Heart right ventricle (tissue), 16 donors: ENCODE measurements at regions of chr7 and their contacts with region 1.

Region 1: DNA sequence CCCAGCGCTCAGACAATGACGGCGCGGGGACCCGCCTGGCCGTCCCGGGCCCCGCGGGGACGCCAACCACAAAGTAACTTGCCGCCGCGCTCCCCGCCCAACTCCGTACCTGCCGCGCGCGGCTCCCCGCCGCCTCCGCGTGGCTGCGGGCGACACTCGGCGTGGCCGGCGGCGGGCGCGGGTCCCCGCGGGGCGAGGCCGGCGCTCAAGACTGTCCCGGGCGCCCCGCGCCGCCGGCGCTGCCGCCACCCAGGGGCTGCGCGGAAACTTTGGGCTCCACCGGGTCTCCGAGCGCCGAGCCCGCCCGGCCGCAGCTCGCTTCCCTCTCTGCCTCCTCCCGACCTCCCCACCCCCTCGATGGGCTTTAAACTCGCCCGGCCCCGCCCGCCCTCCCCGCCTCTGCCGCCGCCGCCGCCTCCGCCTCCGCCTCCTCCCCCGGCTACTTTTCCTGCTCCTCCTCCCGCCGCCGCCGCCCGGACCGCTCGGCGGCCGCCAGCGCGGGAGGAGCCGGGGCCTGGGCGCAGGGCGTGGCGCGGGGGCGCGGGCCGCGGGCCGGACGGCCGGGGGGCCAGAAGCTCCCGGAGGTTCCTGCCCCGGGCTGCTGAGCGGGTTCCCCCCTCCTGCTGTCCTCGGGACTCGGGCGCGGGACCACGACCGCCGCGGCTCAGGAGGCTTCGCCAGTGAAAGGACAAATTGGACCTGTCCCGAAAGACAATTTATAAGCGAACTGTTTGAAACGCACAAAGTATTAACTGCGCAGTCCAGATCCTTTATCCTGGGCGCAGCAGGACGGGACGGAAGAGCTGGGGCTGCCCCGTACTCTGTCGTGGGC is 10.6 kb upstream of the GRB10 start:
- DNase-seq: peak; percentile 79 to 80
- ATAC-seq: peak; percentile 66 to 89 (median 82)
- H3K4me3 ChIP-seq: peak overlapping the region in 9 of 10 donors; percentile 54 to 94 (median 72)
- H3K27ac ChIP-seq: peak overlapping the region; percentile 74 to 94 (median 81)
- H3K4me1 ChIP-seq: peaks cover 0 to 44% (median 29%) of the 10 kb centered on the region in 9 donors
- H3K27me3 ChIP-seq: peaks cover 0 to 9% (median 0%) of the 10 kb centered on the region in 7 donors
- CTCF ChIP-seq: no peak

Region 2: GRCh38 chr7:50653126-50653864 is 140.0 kb before region 1 on chr7:
- intact Hi-C with region 1: loop called in 1 of 10 experiments (anchors 10 kb)
- DNase-seq: no peak
- ATAC-seq: peak; percentile 53 to 81 (median 70)
- H3K4me3 ChIP-seq: peak overlapping the region in 1 of 10 donors; percentile 27
- H3K27ac ChIP-seq: peak overlapping the region; percentile 65 to 94 (median 72)
- H3K4me1 ChIP-seq: peaks cover 50 to 89% (median 72%) of the 10 kb centered on the region in 9 donors
- H3K27me3 ChIP-seq: no peaks in the 10 kb centered on the region
- CTCF ChIP-seq: no peak

Region 3: GRCh38 chr7:50696810-50697582 is 96.3 kb before region 1 on chr7:
- intact Hi-C with region 1: loop called in 1 of 10 experiments (anchors 5 kb)
- DNase-seq: no peak
- ATAC-seq: peak in 4 of 8 donors; percentile 20 to 50 (median 40)
- H3K4me3 ChIP-seq: no peak overlapping the region
- H3K27ac ChIP-seq: no peak overlapping the region
- H3K4me1 ChIP-seq: peaks cover 0 to 45% (median 16%) of the 10 kb centered on the region in 9 donors
- H3K27me3 ChIP-seq: no peaks in the 10 kb centered on the region
- CTCF ChIP-seq: peak in 8 of 9 donors; percentile 26 to 58 (median 44)

Region 4: DNA sequence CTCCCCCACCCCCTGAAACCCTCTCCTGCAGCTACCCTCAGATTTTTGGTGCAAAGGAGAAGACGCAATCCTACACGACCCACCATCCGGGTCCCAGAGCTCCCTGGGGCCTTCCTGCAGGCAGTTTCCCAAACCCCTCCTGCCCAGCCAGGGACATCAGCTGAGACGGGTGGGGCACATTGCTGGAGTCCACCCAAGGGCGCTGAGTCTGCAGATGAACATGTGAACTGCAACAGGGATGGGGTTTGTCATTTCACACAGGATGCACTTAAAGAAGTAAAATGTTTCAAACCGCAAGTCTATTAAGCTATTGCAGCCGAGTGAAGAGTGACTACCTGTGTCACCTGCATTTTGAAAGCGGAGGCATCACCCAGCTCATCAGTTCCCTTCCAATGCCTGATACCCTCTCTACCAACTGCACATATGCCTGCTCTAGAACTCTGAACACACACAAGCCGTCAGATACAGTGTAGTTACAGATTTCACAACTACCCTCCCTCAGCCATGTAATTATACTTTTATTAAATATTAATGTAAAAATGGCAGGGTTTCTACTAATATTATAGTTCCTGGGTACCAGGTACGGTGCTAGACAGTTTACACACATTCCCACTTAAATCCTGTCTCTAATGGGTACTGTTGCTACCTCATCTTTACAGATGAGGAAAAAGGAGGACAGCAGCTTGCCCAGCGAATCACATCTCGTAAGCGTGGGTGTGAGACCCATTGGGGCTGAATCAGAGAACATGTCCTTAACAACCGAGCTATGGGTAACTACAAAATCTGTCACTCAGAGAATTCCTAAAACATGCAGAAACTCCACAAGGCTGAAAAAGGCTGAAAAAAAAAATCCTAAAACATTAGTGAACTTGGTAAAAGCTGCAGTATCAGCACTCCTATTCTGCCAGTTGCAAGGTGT is 81.8 kb before region 1 on chr7:
- intact Hi-C with region 1: loop called in 2 of 10 experiments (anchors 5 kb)
- DNase-seq: peak; percentile 41 to 56
- ATAC-seq: peak in 7 of 8 donors; percentile 18 to 60 (median 40)
- H3K4me3 ChIP-seq: no peak overlapping the region
- H3K27ac ChIP-seq: peak overlapping the region in 2 of 10 donors; percentile 63 to 66
- H3K4me1 ChIP-seq: peaks cover 12 to 100% (median 59%) of the 10 kb centered on the region in 9 donors
- H3K27me3 ChIP-seq: no peaks in the 10 kb centered on the region
- CTCF ChIP-seq: no peak

Region 5: DNA sequence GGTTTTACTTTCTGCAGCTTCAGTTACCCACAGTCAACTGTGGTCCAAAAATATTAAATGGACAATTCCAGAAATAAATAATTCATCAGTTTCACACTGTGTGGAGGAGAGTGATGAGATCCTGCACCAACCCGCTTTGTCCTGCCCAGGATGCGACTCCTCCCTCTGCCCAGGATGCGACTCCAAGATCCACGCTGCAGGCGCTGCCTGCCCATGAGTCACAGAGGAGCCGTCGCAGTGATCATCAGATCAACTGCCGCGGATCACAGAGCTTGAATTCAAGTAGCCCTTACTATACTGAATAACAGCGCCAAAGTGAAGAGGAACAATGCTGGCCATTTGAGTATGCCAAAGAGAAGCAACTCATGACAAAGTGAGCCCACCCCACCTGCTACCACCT is 72.2 kb before region 1 on chr7:
- intact Hi-C with region 1: loop called in 1 of 10 experiments (anchors 5 kb)
- DNase-seq: no peak
- ATAC-seq: peak in 5 of 8 donors; percentile 15 to 67 (median 31)
- H3K4me3 ChIP-seq: no peak overlapping the region
- H3K27ac ChIP-seq: peak overlapping the region in 2 of 10 donors; percentile 9 to 49
- H3K4me1 ChIP-seq: peaks cover 7 to 95% (median 68%) of the 10 kb centered on the region in 9 donors
- H3K27me3 ChIP-seq: no peaks in the 10 kb centered on the region
- CTCF ChIP-seq: no peak

Region 6: DNA sequence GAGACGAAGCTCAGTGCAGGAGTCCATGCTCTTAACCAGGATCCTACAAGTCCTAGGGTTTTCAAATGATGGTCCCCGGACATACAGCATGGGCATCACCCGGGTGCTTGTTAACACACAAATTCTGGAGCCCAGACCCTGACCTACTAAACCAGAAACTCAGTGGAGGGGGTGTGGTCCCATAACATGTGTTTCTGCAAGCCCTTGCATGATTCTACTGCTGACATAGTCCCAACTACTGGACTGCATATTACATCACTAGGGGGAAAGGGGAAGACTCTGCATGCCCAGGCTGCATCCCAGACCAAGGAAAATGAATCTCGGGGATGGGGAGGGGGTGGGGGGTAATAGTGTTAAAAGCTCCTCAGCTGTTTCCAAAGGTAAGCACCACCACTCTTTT is 50.9 kb before region 1 on chr7:
- intact Hi-C with region 1: no loop called
- DNase-seq: no peak
- ATAC-seq: no peak
- H3K4me3 ChIP-seq: no peak overlapping the region
- H3K27ac ChIP-seq: no peak overlapping the region
- H3K4me1 ChIP-seq: peaks cover 0 to 69% (median 32%) of the 10 kb centered on the region in 9 donors
- H3K27me3 ChIP-seq: no peaks in the 10 kb centered on the region
- CTCF ChIP-seq: no peak

Region 7: DNA sequence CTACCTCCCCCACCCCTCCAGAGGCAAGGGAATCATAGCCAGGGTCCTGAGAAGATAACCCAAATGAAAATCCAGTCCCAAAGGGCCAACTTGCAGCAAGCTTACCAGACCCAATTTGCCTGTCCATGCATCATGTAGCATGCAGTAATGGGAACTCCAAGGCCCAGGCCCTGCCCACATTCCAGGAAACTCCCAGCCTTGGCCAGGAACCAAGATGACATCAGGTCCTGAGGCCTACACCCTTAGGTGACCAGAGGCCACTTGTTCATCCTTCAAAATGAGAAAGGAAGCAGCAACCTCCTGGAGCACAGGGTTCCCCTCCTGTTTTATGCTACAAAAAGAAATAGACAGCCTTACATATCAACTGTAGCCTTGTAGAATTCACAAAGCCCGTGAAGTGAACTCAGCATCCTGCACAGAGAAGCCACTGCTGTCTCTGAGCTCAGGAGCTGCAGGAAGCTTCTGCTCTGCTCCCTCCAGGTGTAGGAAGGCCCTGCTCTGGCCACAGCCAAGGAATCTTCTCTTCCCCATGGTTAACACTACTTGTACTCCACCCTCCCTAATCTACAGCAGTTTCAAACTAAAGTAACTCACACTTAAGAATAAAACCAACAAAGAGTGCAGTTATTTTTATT is 19.6 kb after region 1 on chr7:
- intact Hi-C with region 1: no loop called
- DNase-seq: peak; percentile 66 to 92
- ATAC-seq: peak; percentile 91 to 99 (median 97)
- H3K4me3 ChIP-seq: no peak overlapping the region
- H3K27ac ChIP-seq: peak overlapping the region in 7 of 10 donors; percentile 13 to 79 (median 50)
- H3K4me1 ChIP-seq: peaks cover 3 to 18% (median 11%) of the 10 kb centered on the region in 9 donors
- H3K27me3 ChIP-seq: no peaks in the 10 kb centered on the region
- CTCF ChIP-seq: no peak

Region 8: DNA sequence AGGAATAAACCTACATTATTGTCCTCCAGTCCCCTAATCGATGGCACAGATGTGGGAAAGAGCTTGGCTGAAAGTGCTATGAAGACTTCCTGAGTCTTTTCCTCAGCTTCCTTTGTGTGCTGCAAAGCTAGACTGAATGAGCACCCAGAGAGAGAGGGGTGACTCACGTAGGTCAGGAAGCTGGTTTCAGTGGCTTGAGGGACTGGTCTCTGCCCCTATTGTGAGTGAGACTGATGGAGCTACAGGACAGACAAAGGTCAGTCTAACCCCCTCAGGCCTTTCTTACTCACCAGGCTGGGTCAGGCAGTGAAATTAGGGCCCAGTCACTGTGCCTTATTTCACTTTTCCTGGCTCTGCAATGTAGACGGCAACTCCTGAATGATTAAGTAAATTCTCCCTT is 160.5 kb after region 1 on chr7:
- intact Hi-C with region 1: loop called in 1 of 10 experiments (anchors 10 kb)
- DNase-seq: peak in 1 of 2 donors; percentile 19
- ATAC-seq: peak; percentile 67 to 95 (median 88)
- H3K4me3 ChIP-seq: no peak overlapping the region
- H3K27ac ChIP-seq: peak overlapping the region in 8 of 10 donors; percentile 8 to 61 (median 32)
- H3K4me1 ChIP-seq: peaks cover 0 to 31% (median 20%) of the 10 kb centered on the region in 9 donors
- H3K27me3 ChIP-seq: no peaks in the 10 kb centered on the region
- CTCF ChIP-seq: no peak

Region 9: DNA sequence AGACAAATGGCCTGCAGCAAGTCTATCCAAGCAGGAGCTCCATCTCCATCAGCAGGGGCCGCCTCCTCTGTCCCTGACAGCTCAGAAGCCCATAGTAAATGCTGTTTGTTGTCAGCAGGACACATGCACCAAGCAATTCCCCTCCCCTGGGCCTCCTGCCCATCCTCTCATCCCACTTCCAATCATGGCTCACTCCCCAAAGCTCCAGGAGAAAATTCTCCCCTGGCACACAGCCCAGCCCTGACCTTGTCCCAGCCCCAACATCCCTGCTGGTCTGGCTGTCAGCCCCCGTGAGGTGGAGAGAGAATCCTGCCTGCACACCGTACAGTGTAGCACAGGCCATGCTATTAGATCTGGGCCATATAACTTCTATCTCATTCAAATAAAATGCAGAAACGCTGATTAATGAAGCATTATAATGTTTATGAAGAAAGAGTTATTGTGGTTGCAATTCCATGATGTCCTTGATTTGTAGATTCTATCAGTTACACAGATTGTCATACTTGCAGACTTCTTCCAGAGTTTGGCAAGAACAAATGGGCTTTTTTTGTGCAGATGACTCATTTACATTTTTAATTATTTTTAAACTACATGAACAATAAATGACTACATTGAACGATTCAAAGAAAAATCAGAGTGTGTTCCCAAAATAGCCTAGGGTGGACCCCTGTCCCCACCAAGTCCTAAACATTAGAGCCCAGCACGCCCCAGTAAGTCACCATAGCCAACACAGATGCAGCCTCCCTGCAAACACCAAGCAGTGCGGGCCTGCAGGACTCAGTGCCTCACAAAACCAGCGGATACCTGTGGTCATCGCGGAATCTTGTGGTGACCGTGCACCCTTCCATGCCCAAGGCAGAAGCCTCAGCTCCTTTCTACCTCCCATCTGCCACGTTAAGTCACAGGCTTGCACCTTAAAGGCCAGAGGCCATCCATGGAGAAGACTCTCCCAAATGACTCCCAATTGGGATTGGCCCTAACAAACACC is 453.2 kb after region 1 on chr7:
- intact Hi-C with region 1: no loop called
- DNase-seq: peak; percentile 82 to 88
- ATAC-seq: peak; percentile 84 to 97 (median 93)
- H3K4me3 ChIP-seq: no peak overlapping the region
- H3K27ac ChIP-seq: peak overlapping the region in 2 of 10 donors; percentile 9 to 30
- H3K4me1 ChIP-seq: peaks cover 0 to 41% (median 4%) of the 10 kb centered on the region in 9 donors
- H3K27me3 ChIP-seq: no peaks in the 10 kb centered on the region
- CTCF ChIP-seq: peak in 4 of 9 donors; percentile 5 to 30 (median 27)